Naive thymus-derived CD8-positive, alpha-beta T cell (primary cell): ENCODE measurements at regions of chr18 and their contacts with region 1.

Region 1: DNA sequence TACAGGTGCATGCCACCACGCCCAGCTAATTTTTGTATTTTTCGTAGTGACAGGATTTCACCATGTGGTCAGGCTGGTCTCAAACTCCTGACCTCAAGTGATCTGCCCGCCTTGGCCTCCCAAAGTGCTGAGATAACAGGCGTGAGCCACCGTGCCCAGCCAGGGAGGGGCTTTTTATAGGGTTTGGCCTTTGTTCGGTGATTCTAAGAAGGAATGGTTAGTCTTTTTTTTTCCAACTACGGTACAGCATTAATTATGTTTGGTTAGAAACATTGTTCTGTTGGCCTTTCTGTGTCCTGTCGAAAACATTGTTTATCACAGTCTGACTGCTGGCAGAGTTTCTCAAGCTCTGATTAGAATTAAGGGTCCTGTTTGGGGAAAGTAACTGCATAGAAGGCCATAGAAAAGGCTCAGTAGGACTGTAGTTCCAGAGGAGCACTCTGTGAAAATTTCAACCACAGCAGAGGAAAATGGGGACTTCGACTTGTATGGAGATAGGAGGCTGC is 19.3 kb upstream of the SMCHD1 start:
- DNase-seq: peak in 1 of 10 donors; percentile 78
- ATAC-seq: peak; percentile 46 to 48
- H3K4me3 Mint-ChIP-seq: peak overlapping the region; percentile 73 to 91 (median 79)
- H3K27ac Mint-ChIP-seq: peak overlapping the region in 8 of 10 donors; percentile 93 to 100 (median 99)
- H3K4me1 Mint-ChIP-seq: peaks cover 45 to 98% (median 85%) of the 10 kb centered on the region in 4 donors
- H3K27me3 Mint-ChIP-seq: no peaks in the 10 kb centered on the region

Region 2: GRCh38 chr18:2557536-2557935 is 78.6 kb before region 1 on chr18:
- POLR2A ChIA-PET with region 1: no interaction called
- DNase-seq: no peak
- ATAC-seq: no peak
- H3K4me3 Mint-ChIP-seq: no peak overlapping the region
- H3K27ac Mint-ChIP-seq: no peak overlapping the region
- H3K4me1 Mint-ChIP-seq: peaks cover 5 to 21% (median 15%) of the 10 kb centered on the region in 4 donors
- H3K27me3 Mint-ChIP-seq: no peaks in the 10 kb centered on the region

Region 3: GRCh38 chr18:2589345-2590068 is 46.7 kb before region 1 on chr18:
- POLR2A ChIA-PET with region 1: interaction called, 111 read pairs
- DNase-seq: peak in 4 of 10 donors; percentile 1 to 58 (median 40)
- ATAC-seq: peak; percentile 85 to 87
- H3K4me3 Mint-ChIP-seq: peak overlapping the region; percentile 63 to 89 (median 78)
- H3K27ac Mint-ChIP-seq: peak overlapping the region; percentile 73 to 99 (median 96)
- H3K4me1 Mint-ChIP-seq: peaks cover 16 to 55% (median 46%) of the 10 kb centered on the region in 4 donors
- H3K27me3 Mint-ChIP-seq: no peaks in the 10 kb centered on the region

Region 4: GRCh38 chr18:2606335-2606734 is 29.8 kb before region 1 on chr18:
- POLR2A ChIA-PET with region 1: interaction called, 105 read pairs
- DNase-seq: peak in 4 of 10 donors; percentile 19 to 53 (median 36)
- ATAC-seq: peak; percentile 51 to 75
- H3K4me3 Mint-ChIP-seq: peak overlapping the region; percentile 8 to 80 (median 68)
- H3K27ac Mint-ChIP-seq: peak overlapping the region in 9 of 10 donors; percentile 75 to 94 (median 89)
- H3K4me1 Mint-ChIP-seq: peaks cover 15 to 55% (median 42%) of the 10 kb centered on the region in 4 donors
- H3K27me3 Mint-ChIP-seq: no peaks in the 10 kb centered on the region

Region 5: GRCh38 chr18:2618009-2618408 is 18.2 kb before region 1 on chr18:
- POLR2A ChIA-PET with region 1: interaction called, 11 read pairs
- DNase-seq: no peak
- ATAC-seq: no peak
- H3K4me3 Mint-ChIP-seq: no peak overlapping the region
- H3K27ac Mint-ChIP-seq: no peak overlapping the region
- H3K4me1 Mint-ChIP-seq: peaks cover 0 to 2% (median under 1%) of the 10 kb centered on the region in 4 donors
- H3K27me3 Mint-ChIP-seq: no peaks in the 10 kb centered on the region